Right cardiac atrium (tissue), 5 donors: ENCODE measurements at regions of chr7 and their contacts with region 1.

Region 1: GRCh38 chr7:75739796-75740672 is 1.3 kb upstream of the HIP1 start:
- DNase-seq: no peak
- ATAC-seq: no peak
- H3K4me3 ChIP-seq: peak overlapping the region; percentile 51
- H3K27ac ChIP-seq: peak overlapping the region; percentile 79
- H3K4me1 ChIP-seq: no peaks in the 10 kb centered on the region
- H3K27me3 ChIP-seq: no peaks in the 10 kb centered on the region

Region 2: GRCh38 chr7:75624134-75624832 is 115.8 kb before region 1 on chr7:
- intact Hi-C with region 1: loop called in 1 of 4 experiments (anchors 10 kb)
- DNase-seq: peak; percentile 67 to 82 (median 73)
- ATAC-seq: peak; percentile 82 to 88
- H3K4me3 ChIP-seq: no peak overlapping the region
- H3K27ac ChIP-seq: peak overlapping the region; percentile 47
- H3K4me1 ChIP-seq: peaks cover 18% of the 10 kb centered on the region
- H3K27me3 ChIP-seq: no peaks in the 10 kb centered on the region

Region 3: GRCh38 chr7:75835688-75836285 is 95.8 kb after region 1 on chr7:
- intact Hi-C with region 1: no loop called
- DNase-seq: no peak
- ATAC-seq: no peak
- H3K4me3 ChIP-seq: no peak overlapping the region
- H3K27ac ChIP-seq: no peak overlapping the region
- H3K4me1 ChIP-seq: no peaks in the 10 kb centered on the region
- H3K27me3 ChIP-seq: no peaks in the 10 kb centered on the region